Adrenal gland (tissue), 19 donors: ENCODE measurements at regions of chrX and their contacts with region 1.

Region 1: GRCh38 chrX:16445166-16445752 is 204.7 kb upstream of the S100G start:
- DNase-seq: peak in 6 of 7 donors; percentile 18 to 54 (median 30)
- H3K4me3 ChIP-seq: no peak overlapping the region
- H3K27ac ChIP-seq: no peak overlapping the region
- H3K4me1 ChIP-seq: no peaks in the 10 kb centered on the region
- H3K27me3 ChIP-seq: peaks cover 5% of the 10 kb centered on the region
- CTCF ChIP-seq: peak; percentile 29 to 63 (median 50)
- POLR2A ChIP-seq: no peak

Region 2: DNA sequence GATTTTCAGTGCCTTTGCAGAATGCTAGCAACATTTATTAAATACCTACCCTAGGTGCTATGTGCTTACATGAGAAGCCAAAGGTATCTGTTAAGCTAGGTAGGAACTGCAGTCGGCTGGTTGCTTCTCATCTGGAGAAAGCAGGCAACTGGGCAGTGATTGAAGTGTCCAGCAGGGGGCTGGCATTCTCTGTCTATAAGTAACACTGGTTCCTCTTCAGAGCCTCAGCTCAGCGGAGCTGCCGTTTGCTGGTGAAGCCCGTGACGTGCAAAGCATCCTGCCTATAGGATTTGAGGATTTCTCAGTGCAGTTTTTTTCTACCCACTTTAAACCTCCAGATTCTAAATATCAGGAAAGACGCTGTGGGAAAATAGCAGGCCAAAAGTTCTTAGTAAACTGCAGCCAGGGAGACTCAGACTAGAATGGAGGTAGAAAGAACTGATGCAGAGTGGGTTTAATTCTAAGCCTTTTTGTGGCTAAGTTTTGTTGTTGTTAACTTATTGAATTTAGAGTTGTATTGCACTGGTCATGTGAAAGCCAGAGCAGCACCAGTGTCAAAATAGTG is 322.0 kb before region 1 on chrX and contains the start of gene GRPR:
- intact Hi-C with region 1: loop called in 1 of 2 experiments (anchors 10 kb)
- DNase-seq: peak; percentile 74 to 93 (median 85)
- H3K4me3 ChIP-seq: no peak within 1 kb of the TSS
- H3K27ac ChIP-seq: no peak within 1 kb of the TSS
- H3K4me1 ChIP-seq: no peaks in the 10 kb centered on the region
- H3K27me3 ChIP-seq: peaks cover 22% of the 10 kb centered on the region
- CTCF ChIP-seq: peak; percentile 48 to 75 (median 71)
- POLR2A ChIP-seq: no peak
- total RNA-seq, gene GRPR: 0.06 to 0.85 (median 0.22) TPM in 6 of 9 donors, not detected in the others

Region 3: GRCh38 chrX:16573781-16574180 is 128.5 kb after region 1 on chrX:
- intact Hi-C with region 1: no loop called
- DNase-seq: no peak
- H3K4me3 ChIP-seq: no peak overlapping the region
- H3K27ac ChIP-seq: no peak overlapping the region
- H3K4me1 ChIP-seq: no peaks in the 10 kb centered on the region
- H3K27me3 ChIP-seq: no peaks in the 10 kb centered on the region
- CTCF ChIP-seq: no peak
- POLR2A ChIP-seq: no peak